ENCODE measurements at regions of chr1 and their contacts with region 1.

Region 1: DNA sequence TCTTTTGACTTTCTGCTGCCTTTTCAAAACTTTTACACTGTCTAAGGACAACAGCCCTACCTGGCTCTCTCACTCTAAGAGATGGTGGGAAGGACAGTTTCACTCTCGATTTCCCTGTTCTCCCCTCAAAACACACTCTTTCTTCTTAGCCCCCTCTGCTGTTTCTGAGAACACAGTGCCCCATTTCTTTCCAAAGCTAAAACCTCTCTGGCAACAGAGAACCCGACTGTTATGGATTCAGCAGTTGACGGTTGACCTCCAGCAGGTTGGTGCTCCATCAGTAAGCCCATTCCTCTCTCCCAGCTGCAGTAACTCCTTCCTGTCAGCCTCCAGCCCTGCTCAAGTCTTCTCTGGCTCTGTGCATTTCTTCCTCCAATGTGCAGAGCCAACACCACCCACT is 88.2 kb upstream of the ABCD3 start:
- DNase-seq: no peak
- ATAC-seq: peak; percentile 74
- H3K4me3 Mint-ChIP-seq: no peak overlapping the region
- H3K27ac Mint-ChIP-seq: no peak overlapping the region
- H3K4me1 Mint-ChIP-seq: peaks cover 52% of the 10 kb centered on the region
- H3K27me3 Mint-ChIP-seq: peaks cover 4% of the 10 kb centered on the region; the same call in 1 of the 2 replicates
- CTCF ChIP-seq: no peak

Region 2: DNA sequence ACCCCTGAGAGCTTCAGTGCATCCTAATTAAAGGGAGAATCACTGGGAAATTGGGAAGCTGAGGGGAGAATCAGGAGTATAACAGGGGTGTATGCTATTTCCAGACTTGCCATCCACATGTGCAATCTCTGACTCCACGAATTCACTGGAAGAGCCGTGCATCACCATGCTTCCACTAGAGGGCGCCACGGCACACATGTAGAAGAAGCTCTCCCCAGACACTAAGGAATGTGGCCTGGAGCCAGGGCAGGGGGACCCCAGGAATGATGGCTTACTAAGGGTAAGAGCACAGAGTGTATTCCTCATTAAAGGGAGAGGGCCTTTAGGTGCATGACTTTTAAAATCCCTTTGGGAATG is 290.5 kb before region 1 on chr1:
- CTCF ChIA-PET with region 1: interaction called, 175 read pairs
- POLR2A ChIA-PET with region 1: no interaction called
- DNase-seq: peak; percentile 86
- ATAC-seq: peak; percentile 90
- H3K4me3 Mint-ChIP-seq: no peak overlapping the region
- H3K27ac Mint-ChIP-seq: no peak overlapping the region
- H3K4me1 Mint-ChIP-seq: peaks cover 20% of the 10 kb centered on the region
- H3K27me3 Mint-ChIP-seq: peaks cover 5% of the 10 kb centered on the region; the same call in 1 of the 2 replicates
- CTCF ChIP-seq: peak; percentile 84

Region 3: DNA sequence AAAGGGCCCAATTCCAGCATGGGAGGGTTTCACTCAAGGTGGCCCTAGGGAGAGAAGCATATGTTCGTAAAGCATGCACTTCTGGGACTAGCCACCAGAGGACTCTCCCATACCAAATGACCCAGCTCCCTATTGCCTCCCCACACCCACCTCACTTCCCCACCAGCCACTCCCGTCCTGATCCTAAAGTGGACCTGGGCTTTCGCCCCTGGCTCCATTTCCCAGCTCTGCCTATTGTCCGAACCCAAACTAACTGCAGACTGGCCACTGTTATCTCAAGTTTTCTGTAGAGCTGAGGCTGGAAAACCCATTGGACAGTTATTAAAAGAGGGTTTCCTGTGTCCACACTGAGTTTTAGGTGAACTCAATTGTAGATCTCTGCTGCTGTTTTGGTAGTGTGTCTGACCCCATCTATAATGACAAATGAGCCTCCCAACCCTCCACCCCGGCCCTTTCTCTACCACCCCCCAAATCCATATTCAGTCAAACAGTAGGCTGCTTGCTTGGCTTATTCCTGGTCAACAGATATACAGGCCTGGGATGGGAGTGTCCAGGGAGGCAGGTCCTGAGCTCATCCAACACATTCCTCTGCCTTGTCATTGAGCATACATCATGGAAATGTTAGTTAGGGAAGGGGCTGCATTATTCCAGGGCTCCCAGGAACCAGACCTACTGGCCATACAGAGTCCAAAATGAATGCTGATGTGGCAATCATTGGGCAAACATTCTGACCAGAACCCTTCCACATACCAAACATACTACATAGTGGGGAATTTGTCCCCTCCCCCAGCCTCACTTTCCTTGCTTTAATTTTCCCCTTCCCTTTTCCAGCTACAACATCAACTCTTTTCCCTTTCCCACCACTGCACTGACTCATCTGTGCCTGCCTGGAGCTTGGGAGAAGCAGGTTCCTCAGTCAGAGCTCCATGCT is 268.2 kb before region 1 on chr1:
- CTCF ChIA-PET with region 1: interaction called, 190 read pairs
- POLR2A ChIA-PET with region 1: interaction called, 3 read pairs
- DNase-seq: peak; percentile 78
- ATAC-seq: peak; percentile 97
- H3K4me3 Mint-ChIP-seq: no peak overlapping the region
- H3K27ac Mint-ChIP-seq: no peak overlapping the region
- H3K4me1 Mint-ChIP-seq: peaks cover 17% of the 10 kb centered on the region
- H3K27me3 Mint-ChIP-seq: peaks cover 35% of the 10 kb centered on the region
- CTCF ChIP-seq: peak; percentile 85

Region 4: GRCh38 chr1:94081566-94082344 is 248.2 kb before region 1 on chr1:
- CTCF ChIA-PET with region 1: no interaction called
- POLR2A ChIA-PET with region 1: no interaction called
- DNase-seq: no peak
- ATAC-seq: no peak
- H3K4me3 Mint-ChIP-seq: no peak overlapping the region
- H3K27ac Mint-ChIP-seq: no peak overlapping the region
- H3K4me1 Mint-ChIP-seq: peaks cover 6% of the 10 kb centered on the region; the same call in 1 of the 2 replicates
- H3K27me3 Mint-ChIP-seq: peaks cover 10% of the 10 kb centered on the region
- CTCF ChIP-seq: no peak

Region 5: GRCh38 chr1:94299627-94300552 is 30.1 kb before region 1 on chr1:
- CTCF ChIA-PET with region 1: interaction called, 16 read pairs
- POLR2A ChIA-PET with region 1: no interaction called
- DNase-seq: no peak
- ATAC-seq: peak; percentile 62
- H3K4me3 Mint-ChIP-seq: no peak overlapping the region
- H3K27ac Mint-ChIP-seq: no peak overlapping the region
- H3K4me1 Mint-ChIP-seq: peaks cover 8% of the 10 kb centered on the region
- H3K27me3 Mint-ChIP-seq: no peaks in the 10 kb centered on the region
- CTCF ChIP-seq: no peak

Region 6: DNA sequence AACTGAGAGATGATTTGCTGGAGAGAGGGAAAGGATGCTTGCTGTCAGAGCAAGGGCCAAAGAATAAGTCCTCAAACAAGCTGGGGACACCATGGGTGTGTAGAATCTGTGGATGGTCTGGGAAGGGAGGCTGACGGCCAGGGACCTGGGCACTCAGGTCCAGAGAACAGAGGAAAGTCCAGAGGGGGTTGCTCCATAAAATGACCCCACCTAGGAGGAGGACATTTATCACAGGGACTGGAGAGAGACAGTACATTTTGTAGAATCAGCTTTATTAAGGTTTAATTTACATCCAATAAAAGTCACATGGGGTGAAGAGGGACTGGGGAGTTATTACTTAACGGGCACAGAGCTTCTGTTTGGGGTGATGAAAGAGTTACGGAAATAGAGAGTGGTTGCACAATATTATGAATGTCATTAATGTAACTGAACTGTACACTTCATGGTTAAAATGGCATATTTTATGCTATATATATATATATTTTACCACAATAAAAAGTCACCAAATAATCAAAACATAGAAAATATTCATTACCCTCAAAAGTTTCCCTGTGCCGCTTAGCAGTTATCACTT is 15.2 kb after region 1 on chr1:
- CTCF ChIA-PET with region 1: no interaction called
- POLR2A ChIA-PET with region 1: no interaction called
- DNase-seq: no peak
- ATAC-seq: no peak
- H3K4me3 Mint-ChIP-seq: no peak overlapping the region
- H3K27ac Mint-ChIP-seq: no peak overlapping the region
- H3K4me1 Mint-ChIP-seq: 0 out of 2 replicates have a peak, but pooled peaks cover 3% of the 10 kb centered on the region
- H3K27me3 Mint-ChIP-seq: peaks cover 2% of the 10 kb centered on the region; the same call in 1 of the 2 replicates
- CTCF ChIP-seq: no peak

Region 7: DNA sequence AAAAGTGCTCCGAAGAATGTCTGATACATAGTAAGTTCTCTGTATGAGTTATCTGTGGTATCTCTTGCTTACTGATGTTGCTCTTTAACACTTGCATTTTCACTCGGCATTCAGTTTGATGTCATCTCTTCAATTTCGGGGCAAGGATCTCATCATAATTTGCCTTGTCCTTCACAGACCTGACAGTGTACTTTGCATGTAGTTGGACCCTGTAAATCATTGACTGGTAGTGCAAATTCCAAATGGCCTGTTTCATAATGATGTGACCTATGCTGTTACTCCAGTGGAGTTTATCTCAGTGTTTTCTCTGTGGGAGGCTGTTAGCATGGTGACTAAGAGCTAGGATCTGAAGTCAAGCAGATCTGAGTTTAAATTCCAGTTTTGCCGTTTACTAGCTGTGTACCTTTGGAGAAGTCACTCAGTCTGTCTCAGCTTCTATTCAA is 54.0 kb after region 1 on chr1:
- CTCF ChIA-PET with region 1: no interaction called
- POLR2A ChIA-PET with region 1: no interaction called
- DNase-seq: no peak
- ATAC-seq: no peak
- H3K4me3 Mint-ChIP-seq: no peak overlapping the region
- H3K27ac Mint-ChIP-seq: no peak overlapping the region
- H3K4me1 Mint-ChIP-seq: peaks cover 6% of the 10 kb centered on the region
- H3K27me3 Mint-ChIP-seq: peaks cover 5% of the 10 kb centered on the region; the same call in 1 of the 2 replicates
- CTCF ChIP-seq: no peak

Measured in WTC11 (cell line).